Activated CD4-positive, alpha-beta memory T cell treated with anti-CD3 and anti-CD28 coated beads for 36 hours (primary cell): ENCODE measurements at regions of chr19 and their contacts with region 1.

Region 1: DNA sequence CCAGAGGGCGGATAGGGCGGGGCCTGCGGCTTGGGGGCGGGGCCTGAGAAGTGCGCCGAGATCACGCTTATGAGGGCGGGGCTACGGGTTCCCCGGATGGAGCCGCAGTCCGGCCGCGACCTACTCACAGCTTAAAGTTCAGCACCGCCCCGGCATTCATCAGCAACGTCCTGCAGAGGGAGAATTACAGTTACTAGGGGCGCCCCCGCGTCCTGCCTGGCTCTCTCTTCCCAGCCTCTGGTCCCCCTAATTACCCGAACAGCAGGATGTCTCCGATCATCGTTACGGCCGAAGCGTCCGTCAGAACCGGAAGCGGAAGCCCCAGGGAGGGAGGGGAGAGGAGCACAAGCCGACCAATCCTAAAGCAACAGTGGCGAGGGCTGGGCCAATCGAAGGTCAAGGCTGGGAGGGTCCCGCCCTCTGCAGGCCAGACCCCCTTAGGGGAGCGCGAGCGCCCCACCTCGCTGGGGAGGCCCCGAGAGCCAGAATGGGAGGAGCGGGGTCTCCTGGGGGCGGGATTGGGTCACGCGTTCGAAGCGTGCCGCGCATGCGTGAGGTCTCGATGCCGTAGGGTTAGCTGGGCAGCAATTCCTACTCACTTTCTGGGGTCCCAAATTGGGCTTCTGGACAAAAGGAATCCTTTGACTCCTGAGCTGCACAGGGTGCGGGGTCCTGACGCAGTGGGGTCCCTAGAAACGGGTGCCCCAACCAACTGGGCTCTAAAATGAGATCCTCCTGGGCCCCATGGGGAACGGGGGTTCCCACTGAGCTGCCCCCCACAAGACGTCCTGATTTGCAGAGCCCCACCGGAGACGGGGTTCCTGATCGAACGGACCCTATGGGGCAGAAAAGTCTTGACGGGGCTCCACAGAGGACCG is at the start of gene SMIM7:
- DNase-seq: peak; percentile 99
- H3K4me3 Mint-ChIP-seq: peak within 1 kb of the TSS; percentile 93
- H3K27ac Mint-ChIP-seq: peak within 1 kb of the TSS; percentile 95
- H3K4me1 Mint-ChIP-seq: peaks cover 28% of the 10 kb centered on the region
- H3K27me3 Mint-ChIP-seq: peaks cover 2% of the 10 kb centered on the region
- total RNA-seq, gene SMIM7: 50.5 to 50.9 TPM

Region 2: DNA sequence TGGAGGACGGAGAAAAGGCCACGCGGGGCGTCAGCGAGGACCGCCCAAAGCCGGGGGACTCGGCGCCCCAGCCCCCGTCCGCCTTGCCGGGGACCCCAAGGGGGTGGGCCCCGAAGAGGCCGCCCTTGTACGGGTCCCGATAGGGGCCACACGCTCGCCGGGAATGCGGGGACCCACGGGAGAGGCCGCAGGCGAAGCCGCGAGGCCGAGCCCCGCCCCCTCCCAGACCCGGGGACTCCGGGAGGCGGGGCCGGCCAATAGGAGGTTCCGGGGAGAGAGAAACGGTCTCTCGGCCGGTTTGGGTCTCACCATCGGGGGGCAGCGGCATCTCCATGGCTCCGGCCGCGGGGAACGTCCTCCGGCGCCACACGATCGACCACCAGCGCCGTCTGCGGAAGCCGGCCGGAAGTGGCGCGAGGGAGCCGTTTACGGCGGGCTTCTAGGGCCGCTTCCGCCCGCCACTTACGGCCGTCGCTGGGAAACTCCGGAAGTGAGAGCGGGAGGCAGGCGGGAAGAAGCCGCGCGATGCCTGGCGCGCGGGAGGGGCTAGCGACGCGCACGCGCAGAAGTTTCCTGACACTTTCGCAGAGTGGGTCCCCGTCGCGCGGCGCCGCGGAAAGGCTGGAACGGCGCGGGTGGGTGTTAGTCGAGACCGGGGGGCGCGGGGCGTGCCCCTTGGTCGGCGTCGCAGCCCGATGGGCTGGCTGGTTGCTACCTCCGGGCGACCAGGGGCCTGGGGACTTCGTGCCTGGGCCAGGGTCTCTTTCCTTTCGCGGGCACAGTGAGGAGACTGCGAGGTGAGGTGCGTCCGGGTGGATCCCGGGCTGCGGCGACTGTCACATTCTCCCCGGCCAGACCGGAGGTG is 117.8 kb before region 1 on chr19 and contains the start of gene CHERP:
- CTCF ChIA-PET with region 1: no interaction called
- POLR2A ChIA-PET with region 1: interaction called, 5 read pairs
- intact Hi-C with region 1: loop called (anchors 1 kb)
- DNase-seq: peak; percentile 96
- H3K4me3 Mint-ChIP-seq: peak within 1 kb of the TSS; percentile 84
- H3K27ac Mint-ChIP-seq: peak within 1 kb of the TSS; percentile 81
- H3K4me1 Mint-ChIP-seq: peaks cover 53% of the 10 kb centered on the region
- H3K27me3 Mint-ChIP-seq: no peaks in the 10 kb centered on the region
- total RNA-seq, gene CHERP: 50.8 TPM

Region 3: GRCh38 chr19:16572332-16573211 is 87.5 kb before region 1 on chr19 and contains the start of gene SLC35E1:
- CTCF ChIA-PET with region 1: interaction called, 3 read pairs
- POLR2A ChIA-PET with region 1: no interaction called
- intact Hi-C with region 1: loop called (anchors 5 kb)
- DNase-seq: peak; percentile 95
- H3K4me3 Mint-ChIP-seq: peak within 1 kb of the TSS; percentile 92
- H3K27ac Mint-ChIP-seq: peak within 1 kb of the TSS; percentile 93
- H3K4me1 Mint-ChIP-seq: peaks cover 53% of the 10 kb centered on the region
- H3K27me3 Mint-ChIP-seq: no peaks in the 10 kb centered on the region
- total RNA-seq, gene SLC35E1: 42.0 to 46.0 TPM

Region 4: DNA sequence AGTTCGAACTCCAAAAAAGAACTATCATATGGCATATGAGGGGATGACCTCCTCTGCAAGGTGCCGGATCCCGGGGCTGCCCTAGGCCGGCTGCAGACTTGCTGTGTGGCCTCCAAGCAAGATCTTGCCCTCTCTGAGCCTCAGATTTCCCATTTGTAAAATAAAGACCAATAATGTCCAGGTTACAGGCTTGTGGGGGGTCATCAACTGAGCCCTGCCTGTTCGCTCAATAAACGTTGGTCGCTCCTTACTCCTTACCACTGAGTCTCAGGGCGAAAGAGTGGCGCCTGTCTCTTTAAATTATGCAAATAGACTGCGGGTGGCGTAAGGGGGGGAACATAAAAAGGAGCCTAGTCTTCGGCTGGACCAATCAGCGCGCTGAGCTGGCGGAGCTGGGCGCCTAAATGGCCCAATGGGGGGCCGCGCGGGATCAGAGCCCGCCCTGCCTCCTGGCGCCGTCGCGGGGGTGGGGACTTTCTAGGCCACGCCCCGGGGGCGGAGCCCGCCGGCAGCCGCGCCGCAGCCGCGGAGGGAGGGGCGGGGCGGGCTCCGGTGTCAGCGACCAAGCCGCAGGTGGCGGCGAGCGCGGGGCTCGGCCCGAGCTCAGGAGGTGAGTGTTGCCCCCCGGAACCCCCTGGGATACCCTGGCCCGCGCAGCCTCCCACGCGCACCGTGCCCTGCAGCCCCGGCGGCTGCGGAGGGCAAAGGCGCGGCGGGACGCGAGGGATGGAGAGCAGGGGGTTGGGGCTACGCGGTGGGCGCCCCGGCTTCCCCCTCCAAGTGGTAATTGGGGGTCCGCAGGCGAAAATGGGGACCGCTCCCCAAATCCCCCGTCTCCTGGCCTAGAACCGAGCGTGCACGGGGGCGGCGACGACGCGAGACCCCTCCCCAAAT is 1087.4 kb after region 1 on chr19:
- CTCF ChIA-PET with region 1: no interaction called
- POLR2A ChIA-PET with region 1: no interaction called
- intact Hi-C with region 1: loop called (anchors 5 kb)
- DNase-seq: peak; percentile 97
- H3K4me3 Mint-ChIP-seq: peak overlapping the region; percentile 83
- H3K27ac Mint-ChIP-seq: peak overlapping the region; percentile 65
- H3K4me1 Mint-ChIP-seq: peaks cover 39% of the 10 kb centered on the region
- H3K27me3 Mint-ChIP-seq: no peaks in the 10 kb centered on the region